Dorsolateral prefrontal cortex (tissue), 120 donors: ENCODE measurements at regions of chr6 and their contacts with region 1.

Region 1: DNA sequence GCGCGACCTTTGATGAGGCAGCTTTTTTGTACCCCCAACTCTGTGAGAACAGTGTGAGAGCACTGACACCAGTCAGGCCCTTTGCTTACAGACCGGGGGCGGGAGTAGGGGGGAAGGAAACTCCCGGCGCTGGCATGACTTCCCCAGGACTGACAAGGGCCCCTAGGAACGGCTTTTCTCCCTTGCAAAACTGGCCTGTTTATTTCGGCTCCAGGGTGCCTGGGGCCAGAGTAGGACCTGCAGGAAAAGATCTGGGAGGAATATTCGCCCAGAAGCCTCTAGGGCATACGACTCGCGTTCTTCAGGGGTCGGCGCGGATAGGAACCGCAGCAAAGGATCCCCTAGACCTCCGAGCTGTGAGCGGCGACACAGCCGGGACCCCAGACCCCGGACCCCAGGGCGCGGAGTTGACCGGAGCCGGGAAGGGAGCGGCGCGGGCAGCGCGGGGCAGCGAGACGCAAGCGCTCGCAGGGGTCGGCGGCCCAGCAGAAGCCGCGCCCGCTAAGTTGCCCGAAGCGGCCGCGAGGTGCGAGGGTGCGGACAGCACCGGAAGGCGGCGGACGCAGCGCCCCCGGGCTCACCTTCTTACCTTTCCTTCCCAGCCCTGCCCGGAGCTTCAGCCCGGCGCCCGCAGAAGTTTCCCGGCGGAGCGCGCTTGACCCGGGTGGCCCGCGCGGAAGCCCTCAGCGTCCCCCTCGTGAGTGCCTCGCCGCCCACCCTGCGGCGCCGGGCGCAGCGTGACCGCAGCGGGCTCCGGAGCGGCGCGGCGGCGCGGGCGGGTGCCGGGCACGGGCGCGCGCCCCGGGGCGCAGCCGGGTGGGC is at the start of gene POPDC3:
- DNase-seq: peak in 6 of 10 donors; percentile 22 to 58 (median 50)
- H3K4me3 ChIP-seq: peak within 1 kb of the TSS; percentile 52 to 82 (median 73)
- H3K27ac ChIP-seq: peak within 1 kb of the TSS; percentile 58 to 96 (median 92)
- H3K27me3 ChIP-seq: peaks cover 0 to 7% (median 0%) of the 10 kb centered on the region in 45 donors
- CTCF ChIP-seq: peak in 2 of 56 donors; percentile 18
- total RNA-seq, gene POPDC3: 8.8 to 27.8 (median 19.1) TPM

Region 2: GRCh38 chr6:105336986-105337385 is 157.5 kb after region 1 on chr6:
- intact Hi-C with region 1: no loop called
- DNase-seq: no peak
- H3K4me3 ChIP-seq: no peak overlapping the region
- H3K27ac ChIP-seq: no peak overlapping the region
- H3K27me3 ChIP-seq: no peaks in the 10 kb centered on the region
- CTCF ChIP-seq: no peak

Region 3: GRCh38 chr6:105363100-105363754 is 183.8 kb after region 1 on chr6:
- intact Hi-C with region 1: loop called in 1 of 2 experiments (anchors 10 kb)
- DNase-seq: peak in 1 of 10 donors; percentile 42
- H3K4me3 ChIP-seq: no peak overlapping the region
- H3K27ac ChIP-seq: peak overlapping the region in 50 of 59 donors; percentile 3 to 88 (median 62)
- H3K27me3 ChIP-seq: no peaks in the 10 kb centered on the region
- CTCF ChIP-seq: peak in 53 of 56 donors; percentile 35 to 78 (median 59)